Mammary epithelial cell (primary cell): ENCODE measurements at regions of chr1 and their contacts with region 1.

Region 1: DNA sequence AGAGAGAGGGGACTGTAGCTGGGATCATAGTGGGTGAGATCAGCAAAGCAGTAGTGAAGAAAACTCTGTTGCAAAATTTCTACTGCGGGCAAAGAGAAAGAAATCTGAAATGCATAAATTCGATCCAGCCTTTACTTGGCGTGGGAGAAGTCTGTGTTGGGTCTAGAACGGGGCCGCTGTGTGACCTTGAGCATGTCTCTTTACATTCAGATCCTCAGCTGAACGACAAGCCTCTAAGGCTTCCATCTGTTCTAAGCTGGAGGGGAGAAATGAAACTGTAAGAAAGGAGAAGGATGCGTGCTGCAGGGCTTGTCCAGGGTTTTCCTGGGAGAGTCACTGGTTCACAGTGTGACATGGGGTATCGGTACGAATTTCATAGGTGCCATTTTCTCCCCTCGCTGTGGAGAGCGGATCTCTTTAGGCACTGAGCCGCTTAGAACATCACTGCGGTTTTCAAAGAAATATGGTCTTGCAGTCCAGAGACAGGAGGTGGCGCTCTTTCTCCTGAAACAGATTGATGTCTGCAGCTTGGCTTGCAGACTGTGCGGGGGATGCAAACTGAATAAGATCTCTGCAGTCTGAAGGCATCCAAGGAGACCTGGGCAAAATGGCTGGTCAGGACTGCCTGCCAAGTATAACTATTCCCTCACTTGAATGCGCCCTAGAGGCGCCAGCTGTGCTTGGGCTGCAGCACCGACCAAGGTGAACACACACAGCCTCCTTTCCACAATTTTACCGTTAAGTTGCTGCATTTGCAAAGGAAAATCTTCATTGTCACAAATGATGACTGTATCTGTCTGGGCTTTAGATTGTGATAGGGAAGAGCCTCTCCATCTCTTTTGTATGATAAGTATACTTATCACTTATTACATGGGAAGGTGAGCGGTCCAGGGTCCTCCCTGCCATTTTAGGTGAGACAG is 104.1 kb downstream of the XCL2 start:
- DNase-seq: peak; percentile 74
- H3K4me3 ChIP-seq: no peak overlapping the region
- H3K27ac ChIP-seq: no peak overlapping the region
- H3K4me1 ChIP-seq: peaks cover 9% of the 10 kb centered on the region
- H3K27me3 ChIP-seq: no peaks in the 10 kb centered on the region
- CTCF ChIP-seq: peak; percentile 84 to 85

Region 2: DNA sequence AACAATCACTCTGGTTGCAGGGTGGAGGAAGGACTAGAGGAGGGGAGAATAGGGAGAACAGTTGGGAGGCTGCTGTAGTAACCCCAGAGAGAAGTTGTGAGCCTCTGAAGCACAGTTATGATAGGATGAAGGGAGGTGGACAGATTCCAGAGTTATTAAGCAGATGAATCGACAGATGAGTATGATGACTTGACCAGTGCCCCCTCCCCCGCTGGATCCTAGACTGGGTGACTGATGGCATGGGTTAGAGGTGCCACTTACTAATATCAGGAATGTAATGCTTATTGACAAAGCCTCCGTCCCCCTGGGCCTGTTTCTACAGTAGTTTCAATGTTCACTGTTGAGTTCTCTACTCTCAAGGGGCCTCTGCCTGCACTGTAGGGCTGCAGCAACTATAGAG is 274.9 kb before region 1 on chr1:
- CTCF ChIA-PET with region 1: interaction called, 14 read pairs
- dilution Hi-C with region 1: no loop called
- in situ Hi-C with region 1: no loop called
- intact Hi-C with region 1: no loop called
- DNase-seq: no peak
- H3K4me3 ChIP-seq: no peak overlapping the region
- H3K27ac ChIP-seq: no peak overlapping the region
- H3K4me1 ChIP-seq: no peaks in the 10 kb centered on the region
- H3K27me3 ChIP-seq: no peaks in the 10 kb centered on the region
- CTCF ChIP-seq: no peak

Region 3: GRCh38 chr1:168342572-168343280 is 97.0 kb before region 1 on chr1:
- CTCF ChIA-PET with region 1: no interaction called
- dilution Hi-C with region 1: no loop called
- in situ Hi-C with region 1: no loop called
- intact Hi-C with region 1: loop called (anchors 1 kb)
- DNase-seq: peak; percentile 69
- H3K4me3 ChIP-seq: no peak overlapping the region
- H3K27ac ChIP-seq: no peak overlapping the region
- H3K4me1 ChIP-seq: peaks cover 14% of the 10 kb centered on the region
- H3K27me3 ChIP-seq: no peaks in the 10 kb centered on the region
- CTCF ChIP-seq: peak; percentile 68 to 77

Region 4: DNA sequence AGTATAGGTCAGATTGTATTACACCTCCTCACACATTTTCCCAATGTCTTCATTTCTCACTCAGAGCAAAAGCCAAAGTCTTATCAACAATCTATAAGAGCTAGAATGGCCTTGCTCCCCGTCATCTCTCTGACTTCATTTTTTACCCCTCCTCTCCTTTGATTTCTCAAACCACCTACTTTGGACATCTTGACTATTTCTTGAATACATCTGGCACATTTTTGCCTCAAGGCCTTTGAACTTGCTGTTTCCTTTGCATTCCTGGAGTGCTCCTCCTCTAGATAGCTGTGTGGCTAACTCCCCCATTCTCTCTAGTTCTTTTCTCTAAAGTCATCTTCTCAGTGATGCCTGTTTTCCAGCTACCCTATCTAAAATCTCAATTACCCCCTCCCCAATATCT is 111.3 kb after region 1 on chr1:
- CTCF ChIA-PET with region 1: no interaction called
- dilution Hi-C with region 1: no loop called
- in situ Hi-C with region 1: no loop called
- intact Hi-C with region 1: loop called (anchors 1 kb)
- DNase-seq: no peak
- H3K4me3 ChIP-seq: no peak overlapping the region
- H3K27ac ChIP-seq: no peak overlapping the region
- H3K4me1 ChIP-seq: no peaks in the 10 kb centered on the region
- H3K27me3 ChIP-seq: no peaks in the 10 kb centered on the region
- CTCF ChIP-seq: no peak

Region 5: DNA sequence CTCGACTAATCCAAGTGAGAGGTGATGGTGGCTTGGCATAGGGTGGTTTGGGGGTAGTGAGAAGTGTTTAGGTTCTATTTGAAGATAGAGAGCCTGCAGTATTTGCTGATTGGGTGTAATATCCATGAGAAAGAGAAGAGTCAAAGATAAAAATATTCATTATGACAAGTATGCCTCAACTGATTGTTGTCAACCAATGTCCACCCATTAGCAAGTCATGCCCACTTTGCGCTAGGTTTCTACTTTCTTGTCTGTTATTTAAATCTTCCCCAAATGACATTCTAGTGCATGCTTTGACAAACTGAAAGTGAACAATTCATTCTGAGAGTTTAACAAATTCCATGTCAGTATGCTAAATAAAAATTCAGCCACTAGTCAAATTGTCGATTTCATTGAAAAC is 132.9 kb after region 1 on chr1:
- CTCF ChIA-PET with region 1: no interaction called
- dilution Hi-C with region 1: no loop called
- in situ Hi-C with region 1: loop called in 1 of 2 experiments (anchors 5 kb)
- intact Hi-C with region 1: loop called (anchors 1 kb)
- DNase-seq: no peak
- H3K4me3 ChIP-seq: no peak overlapping the region
- H3K27ac ChIP-seq: no peak overlapping the region
- H3K4me1 ChIP-seq: no peaks in the 10 kb centered on the region
- H3K27me3 ChIP-seq: peaks cover 4% of the 10 kb centered on the region
- CTCF ChIP-seq: no peak

Region 6: DNA sequence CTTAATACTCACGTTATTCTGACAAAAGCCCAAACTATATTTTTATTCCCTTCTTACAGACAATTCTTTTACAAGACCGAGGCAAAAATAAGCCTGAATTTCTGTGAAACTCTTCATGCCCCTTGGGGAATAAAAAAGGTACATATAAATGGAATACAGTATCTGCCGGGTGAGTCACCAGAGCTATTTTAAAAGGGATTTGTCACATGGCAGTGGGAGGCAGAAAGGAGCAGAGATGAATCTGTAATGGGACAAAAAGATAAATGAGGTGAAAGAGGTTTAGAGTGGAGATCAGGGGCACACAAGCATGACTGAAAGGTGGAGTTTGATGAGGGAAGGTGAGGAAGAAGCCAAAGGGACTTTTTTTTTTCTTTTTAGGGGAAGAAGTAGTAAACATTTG is 145.5 kb after region 1 on chr1:
- CTCF ChIA-PET with region 1: no interaction called
- dilution Hi-C with region 1: no loop called
- in situ Hi-C with region 1: loop called in 1 of 2 experiments (anchors 10 kb)
- intact Hi-C with region 1: no loop called
- DNase-seq: peak; percentile 50
- H3K4me3 ChIP-seq: no peak overlapping the region
- H3K27ac ChIP-seq: no peak overlapping the region
- H3K4me1 ChIP-seq: peaks cover 8% of the 10 kb centered on the region
- H3K27me3 ChIP-seq: no peaks in the 10 kb centered on the region
- CTCF ChIP-seq: no peak